Calu3 (cell line): ENCODE measurements at regions of chr7 and their contacts with region 1.

Region 1: GRCh38 chr7:76338298-76339084 is 20.3 kb downstream of the YWHAG start:
- DNase-seq: no peak
- H3K4me3 Mint-ChIP-seq: no peak overlapping the region
- H3K27ac Mint-ChIP-seq: peak overlapping the region; percentile 50
- H3K4me1 Mint-ChIP-seq: peaks cover 26% of the 10 kb centered on the region
- H3K27me3 Mint-ChIP-seq: no peaks in the 10 kb centered on the region
- CTCF ChIP-seq: no peak

Region 2: GRCh38 chr7:76352193-76352592 is 13.7 kb after region 1 on chr7:
- CTCF ChIA-PET with region 1: no interaction called
- intact Hi-C with region 1: loop called (anchors 1 kb)
- DNase-seq: no peak
- H3K4me3 Mint-ChIP-seq: no peak overlapping the region
- H3K27ac Mint-ChIP-seq: no peak overlapping the region
- H3K4me1 Mint-ChIP-seq: peaks cover 28% of the 10 kb centered on the region
- H3K27me3 Mint-ChIP-seq: no peaks in the 10 kb centered on the region
- CTCF ChIP-seq: no peak